ENCODE measurements at regions of chr4 and their contacts with region 1.

Region 1: GRCh38 chr4:173370477-173371291 is at the start of gene SAP30:
- DNase-seq: peak; percentile 99
- ATAC-seq: peak; percentile 96
- total RNA-seq, gene SAP30: 15.1 TPM

Region 2: GRCh38 chr4:173334085-173334772 is 36.5 kb before region 1 on chr4 and contains the start of gene HMGB2:
- intact Hi-C with region 1: loop called (anchors 1 kb)
- DNase-seq: peak; percentile 100
- ATAC-seq: peak; percentile 96
- total RNA-seq, gene HMGB2: 38.8 TPM